Left ventricle myocardium inferior (tissue), 1 donor: ENCODE measurements at regions of chr6 and their contacts with region 1.

Region 1: DNA sequence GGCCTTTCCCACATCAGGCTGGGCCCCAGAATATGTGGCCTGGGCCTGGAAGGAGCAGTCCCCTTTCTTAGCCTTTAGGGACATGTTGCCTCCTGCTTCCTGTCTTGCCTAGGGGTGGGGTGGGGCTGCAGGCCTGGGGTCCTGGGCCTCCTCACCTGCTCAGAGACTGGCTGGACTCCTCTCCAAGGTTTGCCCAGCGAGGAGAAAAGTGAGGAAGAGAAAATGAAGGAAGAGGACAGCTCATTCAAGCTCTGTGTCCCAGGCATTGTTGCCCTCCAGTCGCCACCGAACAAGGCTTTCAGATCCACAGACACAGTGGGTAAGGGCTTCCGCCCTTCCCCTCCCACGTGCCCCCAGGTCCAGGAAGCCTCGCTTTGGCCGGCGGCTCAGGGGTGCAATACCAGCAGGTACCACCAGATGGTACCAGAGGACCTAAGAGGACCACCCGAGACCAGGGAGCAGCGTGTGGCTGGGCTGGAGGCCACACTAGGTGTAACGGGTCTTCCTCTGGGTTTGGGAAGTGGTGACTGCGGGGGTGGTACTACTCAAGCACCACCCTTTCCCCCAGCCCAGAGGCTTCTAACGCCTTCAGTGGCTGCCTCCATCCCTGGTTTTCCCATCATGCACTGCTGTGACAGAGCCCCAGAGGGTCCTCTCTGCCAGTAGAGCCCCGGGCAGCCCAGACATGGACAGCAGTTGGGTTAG is 5.5 kb upstream of the BAK1 start:
- DNase-seq: peak; percentile 78
- H3K4me3 ChIP-seq: no peak overlapping the region
- H3K27ac ChIP-seq: peak overlapping the region; percentile 41
- H3K4me1 ChIP-seq: peaks cover 40% of the 10 kb centered on the region
- H3K27me3 ChIP-seq: no peaks in the 10 kb centered on the region
- CTCF ChIP-seq: peak; percentile 99

Region 2: DNA sequence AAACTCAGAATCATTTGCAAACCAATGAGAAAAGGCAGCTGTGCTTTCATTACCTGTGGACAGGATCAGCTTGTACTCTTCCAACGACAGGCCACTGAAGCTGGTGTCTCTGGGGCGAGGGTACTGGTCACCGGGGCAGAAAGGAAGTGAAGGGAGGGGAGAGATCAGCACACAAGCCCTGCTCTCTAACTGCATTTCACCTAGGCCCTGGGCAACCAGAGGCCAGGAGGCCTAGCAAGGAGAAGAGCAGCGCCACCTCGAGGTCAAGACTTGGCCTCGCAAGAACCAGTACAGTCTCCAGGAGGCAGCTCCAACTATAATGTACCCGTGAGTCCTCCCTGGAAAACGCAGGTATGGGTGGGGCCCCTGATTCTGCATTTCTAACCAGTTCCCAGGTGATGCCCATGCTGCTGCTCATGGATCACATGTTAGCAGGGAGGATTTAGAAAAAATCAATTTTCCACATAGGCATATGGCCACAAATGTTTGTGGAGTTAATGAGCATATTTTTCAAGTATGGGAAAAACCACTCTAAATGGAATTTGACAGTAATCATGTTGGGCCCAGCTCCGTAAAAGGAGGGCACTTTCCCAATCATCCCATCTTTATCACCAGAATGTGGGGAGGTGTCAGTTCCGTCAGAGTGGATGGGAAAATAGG is 115.0 kb after region 1 on chr6:
- intact Hi-C with region 1: loop called (anchors 5 kb)
- DNase-seq: no peak
- H3K4me3 ChIP-seq: no peak overlapping the region
- H3K27ac ChIP-seq: peak overlapping the region; percentile 36
- H3K4me1 ChIP-seq: peaks cover 60% of the 10 kb centered on the region
- H3K27me3 ChIP-seq: no peaks in the 10 kb centered on the region
- CTCF ChIP-seq: peak; percentile 71